ENCODE measurements at regions of chr17 and their contacts with region 1.

Region 1: GRCh38 chr17:82037113-82037888 is at the start of gene DCXR:
- DNase-seq: peak; percentile 98
- H3K4me3 ChIP-seq: peak within 1 kb of the TSS; percentile 58 to 96 (median 63)
- H3K27ac ChIP-seq: peak within 1 kb of the TSS; percentile 87 to 99
- H3K4me1 ChIP-seq: peaks cover 8 to 10% of the 10 kb centered on the region in 2 donors
- H3K27me3 ChIP-seq: no peaks in the 10 kb centered on the region
- CTCF ChIP-seq: peak; percentile 20 to 72 (median 33)
- POLR2A ChIP-seq: peak; percentile 93
- total RNA-seq, gene DCXR: 202 to 484 (median 228) TPM

Region 2: GRCh38 chr17:82089723-82090548 is 52.6 kb after region 1 on chr17:
- intact Hi-C with region 1: loop called (anchors 10 kb)
- DNase-seq: no peak
- H3K4me3 ChIP-seq: no peak overlapping the region
- H3K27ac ChIP-seq: no peak overlapping the region
- H3K4me1 ChIP-seq: no peaks in the 10 kb centered on the region
- H3K27me3 ChIP-seq: no peaks in the 10 kb centered on the region
- CTCF ChIP-seq: no peak
- POLR2A ChIP-seq: no peak